ENCODE measurements at regions of chr2 and their contacts with region 1.

Region 1: GRCh38 chr2:102240640-102241370 is 54.0 kb downstream of the IL1RL2 start:
- DNase-seq: peak; percentile 92
- ATAC-seq: peak; percentile 97
- H3K4me3 Mint-ChIP-seq: peak overlapping the region; percentile 16
- H3K27ac Mint-ChIP-seq: peak overlapping the region; percentile 71
- H3K4me1 Mint-ChIP-seq: peaks cover 38% of the 10 kb centered on the region
- H3K27me3 Mint-ChIP-seq: no peaks in the 10 kb centered on the region

Region 2: DNA sequence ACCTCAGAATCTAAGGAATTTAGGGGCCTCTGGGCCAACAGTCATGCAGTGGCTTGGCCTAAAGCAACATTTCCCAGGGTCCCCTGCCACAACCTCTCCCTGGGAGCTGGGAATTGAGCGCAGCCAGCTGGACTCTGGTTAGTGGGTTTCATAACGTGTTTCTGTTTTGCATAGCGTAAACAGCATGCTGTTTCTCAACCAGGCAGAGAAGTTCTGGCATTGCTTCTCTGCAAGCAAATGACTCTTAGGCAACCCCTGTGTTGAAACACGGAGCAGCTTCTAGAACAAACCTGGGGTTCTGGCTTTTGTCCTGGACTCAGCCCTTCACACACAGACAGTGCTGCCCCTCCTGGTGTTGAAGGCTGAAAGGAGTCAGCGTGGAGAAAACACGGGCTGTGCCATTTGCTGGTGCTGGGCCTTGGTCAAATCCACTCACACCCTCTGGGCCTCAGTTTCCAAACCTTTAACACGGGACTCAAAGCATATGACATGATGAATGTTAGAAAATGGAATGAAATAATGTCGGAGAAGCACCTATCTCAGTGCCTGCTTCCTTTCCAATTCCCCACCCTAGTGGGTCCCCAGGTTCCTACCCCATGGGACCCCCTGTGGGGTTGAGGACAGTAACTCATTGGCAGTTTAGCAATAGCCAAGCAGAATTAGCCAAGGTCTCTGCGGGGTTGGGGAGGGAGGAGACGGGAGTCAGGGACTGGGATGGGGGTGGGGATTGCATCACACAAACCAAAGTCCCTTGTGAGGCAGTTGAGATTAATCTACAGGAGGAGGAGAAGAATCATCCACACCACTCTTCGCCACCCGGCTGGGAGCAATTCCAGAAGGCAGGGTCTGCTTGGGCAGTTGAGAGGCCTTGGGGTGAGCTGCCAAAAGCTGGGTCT is 279.3 kb before region 1 on chr2:
- CTCF ChIA-PET with region 1: no interaction called
- POLR2A ChIA-PET with region 1: no interaction called
- DNase-seq: no peak
- ATAC-seq: no peak
- H3K4me3 Mint-ChIP-seq: no peak overlapping the region
- H3K27ac Mint-ChIP-seq: no peak overlapping the region
- H3K4me1 Mint-ChIP-seq: no peaks in the 10 kb centered on the region
- H3K27me3 Mint-ChIP-seq: peaks cover 2% of the 10 kb centered on the region

Region 3: DNA sequence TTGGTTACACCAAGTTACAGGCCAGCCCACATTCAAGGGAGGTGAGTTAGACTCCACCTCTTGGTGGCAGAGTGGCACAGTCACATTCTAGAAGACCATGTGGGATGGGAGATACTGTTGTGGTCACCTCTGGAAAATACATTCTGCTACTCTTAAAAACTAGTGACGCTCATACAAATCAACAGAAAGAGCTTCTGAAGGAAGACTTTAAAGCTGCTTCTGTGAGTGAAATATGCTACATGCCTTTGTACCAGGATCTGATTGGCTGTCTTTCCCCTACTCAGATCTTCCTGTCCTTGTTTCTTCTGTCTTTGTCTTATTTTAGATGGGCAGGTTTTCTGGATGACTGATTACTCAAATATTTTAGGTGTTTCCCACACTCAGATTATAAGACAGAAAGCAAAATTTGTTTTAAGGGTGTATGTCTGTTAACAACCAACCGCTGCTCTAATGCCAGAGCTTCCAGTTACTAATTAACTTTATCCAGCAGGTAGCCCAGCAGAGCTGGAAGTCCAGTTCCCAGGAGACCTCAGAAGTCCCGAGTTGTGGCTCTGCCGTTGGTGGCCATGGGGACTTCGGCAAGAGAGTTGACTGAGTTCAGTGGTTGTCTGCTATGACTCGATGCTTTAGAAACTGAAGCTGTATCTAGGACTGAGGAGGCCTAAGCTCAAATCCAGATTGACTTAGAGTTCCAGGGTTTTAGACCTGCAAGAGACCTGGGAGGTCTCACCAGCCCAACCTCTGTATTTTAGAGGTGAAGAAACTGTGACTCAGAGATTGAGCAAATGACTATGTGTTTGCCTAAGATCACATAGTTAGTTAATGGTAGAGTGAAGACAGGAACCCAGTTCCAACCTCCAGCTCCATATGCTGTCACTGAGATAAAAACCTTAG is 241.7 kb before region 1 on chr2:
- CTCF ChIA-PET with region 1: interaction called, 77 read pairs
- POLR2A ChIA-PET with region 1: no interaction called
- DNase-seq: no peak
- ATAC-seq: peak; percentile 36
- H3K4me3 Mint-ChIP-seq: no peak overlapping the region
- H3K27ac Mint-ChIP-seq: no peak overlapping the region
- H3K4me1 Mint-ChIP-seq: peaks cover 7% of the 10 kb centered on the region
- H3K27me3 Mint-ChIP-seq: peaks cover 4% of the 10 kb centered on the region

Region 4: DNA sequence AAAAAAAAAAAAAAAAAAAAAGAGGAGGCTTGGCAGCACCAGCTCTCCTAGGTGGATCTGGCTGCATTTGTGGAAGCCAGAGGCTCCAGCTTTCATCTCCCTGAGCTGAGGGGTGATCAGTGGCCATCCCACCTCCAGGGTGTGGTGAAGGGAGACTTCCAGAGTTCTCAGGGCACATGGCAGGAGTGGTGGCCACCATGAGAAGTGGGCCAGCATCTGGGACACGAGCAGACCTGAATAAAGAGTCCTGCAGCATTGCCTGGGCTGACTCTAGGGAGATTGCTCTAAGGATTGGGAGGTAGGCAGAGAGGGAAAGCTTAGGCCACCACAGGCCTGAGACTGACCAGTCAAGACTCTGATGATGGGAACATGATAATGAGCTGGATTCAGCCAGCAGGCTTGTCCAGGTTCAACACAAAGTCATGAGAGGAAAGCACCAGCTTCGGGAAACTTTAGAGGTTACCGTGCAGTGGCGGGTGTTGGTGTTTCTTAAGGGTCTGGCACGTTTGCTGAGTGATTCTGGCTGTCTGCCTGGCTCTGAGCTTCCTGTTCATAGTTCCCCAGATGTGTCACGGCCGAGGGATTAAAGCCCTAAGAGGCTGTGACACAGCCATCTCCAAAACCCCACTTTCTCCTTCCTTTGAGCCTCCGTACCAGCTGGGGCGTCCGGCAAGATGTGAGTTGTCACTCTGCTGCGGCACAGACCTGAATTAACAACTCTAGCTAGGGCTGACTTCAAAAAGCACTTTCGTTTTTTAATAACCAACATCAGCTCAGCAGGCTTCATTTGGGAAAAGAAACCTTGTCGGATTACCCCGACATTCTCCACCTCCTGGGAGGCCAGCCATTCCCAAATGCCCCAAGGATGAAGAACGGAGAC is 136.6 kb before region 1 on chr2:
- CTCF ChIA-PET with region 1: interaction called, 11 read pairs
- POLR2A ChIA-PET with region 1: no interaction called
- DNase-seq: peak; percentile 31
- ATAC-seq: peak; percentile 27
- H3K4me3 Mint-ChIP-seq: peak overlapping the region; percentile 47
- H3K27ac Mint-ChIP-seq: no peak overlapping the region
- H3K4me1 Mint-ChIP-seq: peaks cover 16% of the 10 kb centered on the region
- H3K27me3 Mint-ChIP-seq: peaks cover 19% of the 10 kb centered on the region

Region 5: GRCh38 chr2:102251042-102251848 is 10.4 kb after region 1 on chr2:
- CTCF ChIA-PET with region 1: interaction called, 50 read pairs
- POLR2A ChIA-PET with region 1: interaction called, 5 read pairs
- DNase-seq: peak; percentile 76
- ATAC-seq: peak; percentile 78
- H3K4me3 Mint-ChIP-seq: peak overlapping the region; percentile 79
- H3K27ac Mint-ChIP-seq: peak overlapping the region; percentile 62
- H3K4me1 Mint-ChIP-seq: peaks cover 45% of the 10 kb centered on the region
- H3K27me3 Mint-ChIP-seq: peaks cover 5% of the 10 kb centered on the region

Region 6: DNA sequence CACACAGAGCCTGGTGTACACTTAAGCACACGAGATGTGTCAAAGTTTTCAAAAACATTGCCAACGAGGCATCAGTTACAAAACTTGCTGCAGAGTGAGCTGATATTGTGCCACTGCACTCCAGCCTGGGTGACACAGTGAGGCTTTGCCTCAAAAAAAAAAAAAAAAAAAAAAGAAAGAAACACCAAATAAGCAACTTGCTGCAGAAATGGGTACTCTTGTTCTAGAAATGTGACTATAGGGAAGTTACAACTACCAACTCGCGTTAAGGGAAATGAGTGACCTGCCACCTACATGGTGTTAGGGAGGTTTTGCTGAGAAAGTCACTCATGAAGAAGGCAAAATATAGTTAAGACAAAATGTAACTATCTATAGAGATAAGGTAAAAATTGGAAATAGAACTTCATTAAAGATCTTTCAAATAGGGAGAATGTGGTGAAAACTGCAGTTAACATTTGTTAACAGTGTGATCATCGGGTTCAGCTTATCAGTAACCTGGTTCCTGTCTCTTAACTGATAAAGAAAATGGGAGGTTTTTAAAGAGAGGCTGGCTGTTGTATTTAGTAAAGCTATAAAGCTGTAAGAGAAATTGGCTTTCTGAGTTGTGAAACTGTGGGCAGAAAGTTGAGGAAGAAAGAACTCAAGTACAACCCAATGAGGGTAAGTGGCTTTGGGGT is 70.3 kb after region 1 on chr2 and contains the start of gene IL1RL1:
- CTCF ChIA-PET with region 1: interaction called, 11 read pairs
- POLR2A ChIA-PET with region 1: no interaction called
- DNase-seq: no peak
- ATAC-seq: no peak
- H3K4me3 Mint-ChIP-seq: no peak within 1 kb of the TSS
- H3K27ac Mint-ChIP-seq: no peak within 1 kb of the TSS
- H3K4me1 Mint-ChIP-seq: peaks cover 21% of the 10 kb centered on the region
- H3K27me3 Mint-ChIP-seq: no peaks in the 10 kb centered on the region
- total RNA-seq, gene IL1RL1: 0.13 to 0.21 TPM

Region 7: DNA sequence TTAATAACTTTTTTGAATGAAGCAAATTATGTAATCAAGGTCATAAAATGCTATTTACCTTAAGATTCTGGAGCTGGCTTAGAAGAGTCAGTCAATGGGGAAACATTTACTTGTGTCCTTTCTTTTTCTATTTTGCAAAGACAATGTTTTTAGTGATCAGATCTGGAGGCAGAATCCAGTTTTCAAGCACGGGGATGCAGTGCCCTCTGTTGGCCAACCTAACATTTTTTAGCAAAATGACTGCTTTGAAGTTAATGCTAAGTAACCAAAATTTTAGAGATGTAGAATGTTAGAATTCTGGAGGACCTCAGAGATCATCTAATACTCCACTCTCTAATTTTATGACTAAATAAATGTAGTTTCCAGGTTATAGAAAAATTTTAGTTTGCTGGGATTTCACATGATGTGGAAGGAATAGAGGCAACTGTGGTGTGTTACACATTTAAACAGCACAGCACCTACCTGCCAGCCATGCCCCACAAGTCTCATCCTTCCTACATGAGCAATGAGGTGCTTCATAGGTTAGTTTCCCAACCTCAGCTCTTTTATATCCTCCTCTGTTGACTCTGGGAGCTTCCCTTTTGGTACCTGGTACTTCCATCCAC is 208.7 kb after region 1 on chr2:
- CTCF ChIA-PET with region 1: interaction called, 67 read pairs
- POLR2A ChIA-PET with region 1: interaction called, 4 read pairs
- DNase-seq: peak; percentile 81
- ATAC-seq: no peak
- H3K4me3 Mint-ChIP-seq: no peak overlapping the region
- H3K27ac Mint-ChIP-seq: peak overlapping the region; percentile 47
- H3K4me1 Mint-ChIP-seq: peaks cover 22% of the 10 kb centered on the region
- H3K27me3 Mint-ChIP-seq: no peaks in the 10 kb centered on the region

Region 8: DNA sequence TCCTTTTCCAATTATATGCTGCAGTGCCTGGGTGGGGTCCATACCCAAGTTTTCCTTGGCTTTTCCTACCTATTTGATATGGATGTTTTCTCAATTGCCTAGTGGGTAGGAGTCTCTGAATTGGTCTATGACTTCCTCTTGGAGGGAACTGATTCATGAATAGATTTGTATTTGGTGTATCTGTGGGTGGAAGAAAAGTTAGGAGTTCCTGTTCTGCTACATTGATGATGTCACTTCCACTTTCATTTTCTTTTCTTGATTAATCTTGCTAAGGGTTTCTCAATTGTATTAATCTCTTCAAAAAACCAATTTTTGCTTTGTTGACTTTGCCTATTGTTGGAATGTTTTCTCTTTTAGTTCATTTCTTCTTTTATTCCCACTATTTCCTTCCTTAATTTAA is 341.1 kb after region 1 on chr2:
- CTCF ChIA-PET with region 1: no interaction called
- POLR2A ChIA-PET with region 1: no interaction called
- DNase-seq: no peak
- ATAC-seq: no peak
- H3K4me3 Mint-ChIP-seq: peak overlapping the region; percentile 10
- H3K27ac Mint-ChIP-seq: no peak overlapping the region
- H3K4me1 Mint-ChIP-seq: peaks cover 6% of the 10 kb centered on the region
- H3K27me3 Mint-ChIP-seq: peaks cover 10% of the 10 kb centered on the region

Measured in activated CD8-positive, alpha-beta T cell treated with anti-CD3 and anti-CD28 coated beads, Interleukin-2, amount 10 ng/mL, durations not matched to agents 7 days and 5 days (primary cell).